Caco-2 (cell line): ENCODE measurements at regions of chr17 and their contacts with region 1.

Region 1: DNA sequence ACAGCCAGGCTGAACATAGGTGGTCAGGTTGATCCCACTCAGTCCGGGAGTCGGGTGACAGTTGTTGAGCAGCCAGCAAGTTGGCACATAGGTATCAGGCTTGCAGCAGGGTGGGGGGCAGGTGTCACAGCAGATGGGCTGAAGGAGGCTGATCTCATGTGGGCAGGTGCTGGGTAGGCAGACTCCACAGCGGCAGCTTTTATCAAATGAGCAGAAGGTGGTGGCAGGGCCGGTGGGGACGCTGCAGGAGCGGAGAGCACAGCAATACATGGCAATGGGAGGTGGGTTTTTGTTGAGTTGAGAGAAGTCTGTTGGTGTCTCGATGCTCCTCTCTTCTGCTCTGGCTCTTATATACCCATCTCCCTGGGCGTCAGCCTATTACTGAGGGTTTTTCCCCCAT is at the start of gene KRTAP3-1:
- DNase-seq: peak; percentile 57 to 66
- H3K4me3 ChIP-seq: no peak within 1 kb of the TSS
- H3K4me3 Mint-ChIP-seq: peak within 1 kb of the TSS; percentile 42
- H3K27ac Mint-ChIP-seq: peak within 1 kb of the TSS; percentile 94
- H3K4me1 ChIP-seq: peaks cover 50% of the 10 kb centered on the region
- H3K4me1 Mint-ChIP-seq: peaks cover 53% of the 10 kb centered on the region
- H3K27me3 ChIP-seq: no peaks in the 10 kb centered on the region
- H3K27me3 Mint-ChIP-seq: no peaks in the 10 kb centered on the region
- CTCF ChIP-seq: no peak
- total RNA-seq, gene KRTAP3-1: 7.4 and 7.9 TPM in 2 replicates

Region 2: DNA sequence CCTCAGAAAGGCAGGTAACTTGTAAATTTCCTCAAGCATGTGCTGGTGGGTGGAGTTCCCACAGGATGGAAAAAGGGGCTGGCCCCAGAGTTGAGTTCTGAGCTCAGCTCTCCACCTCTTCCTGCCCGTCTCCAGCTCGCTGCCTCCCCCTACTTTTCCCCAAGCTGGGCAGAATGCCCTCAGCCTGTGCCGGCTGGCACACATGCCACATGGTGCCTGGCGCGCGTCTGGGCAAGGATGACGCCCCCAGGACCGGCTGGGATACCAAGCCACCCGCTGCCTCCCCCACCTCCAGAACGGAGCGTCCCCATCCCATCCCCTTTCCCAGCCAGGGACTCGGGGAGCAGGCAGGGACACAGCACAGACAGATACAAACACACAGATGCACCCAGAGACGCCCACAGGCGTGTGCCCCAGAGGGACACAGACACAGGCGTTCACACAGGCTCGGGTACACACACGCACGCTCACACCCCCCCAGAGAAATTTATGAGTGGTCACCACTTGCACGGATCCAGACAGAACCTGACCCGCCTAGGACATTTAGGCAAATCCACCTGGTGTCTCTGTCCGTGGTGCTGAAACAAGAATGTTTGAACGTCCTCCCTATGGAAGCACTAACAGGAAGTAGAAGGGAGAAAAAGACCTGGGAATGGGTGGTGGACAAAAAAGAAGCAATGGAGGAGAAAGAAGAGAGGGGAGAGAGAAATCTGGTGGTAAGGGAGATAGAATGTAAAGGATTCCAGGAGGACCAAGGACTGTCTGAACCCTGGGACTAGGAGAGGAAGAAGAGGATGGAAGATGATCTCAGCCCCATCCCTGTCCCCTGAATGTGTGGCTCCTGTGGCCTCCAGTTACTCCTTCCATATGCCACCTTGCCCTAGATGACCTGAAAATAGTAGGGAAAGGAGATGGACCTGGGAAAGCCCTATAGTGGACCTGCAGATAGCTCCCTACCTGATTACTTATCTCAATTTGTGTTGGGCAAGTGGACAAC is 1416.5 kb before region 1 on chr17:
- CTCF ChIA-PET with region 1: no interaction called
- POLR2A ChIA-PET with region 1: no interaction called
- intact Hi-C with region 1: no loop called
- DNase-seq: peak; percentile 77 to 84
- H3K4me3 ChIP-seq: no peak overlapping the region
- H3K4me3 Mint-ChIP-seq: no peak overlapping the region
- H3K27ac Mint-ChIP-seq: no peak overlapping the region
- H3K4me1 ChIP-seq: no peaks in the 10 kb centered on the region
- H3K4me1 Mint-ChIP-seq: peaks cover 7% of the 10 kb centered on the region
- H3K27me3 ChIP-seq: peaks cover 4% of the 10 kb centered on the region
- H3K27me3 Mint-ChIP-seq: peaks cover 38% of the 10 kb centered on the region
- CTCF ChIP-seq: no peak

Region 3: DNA sequence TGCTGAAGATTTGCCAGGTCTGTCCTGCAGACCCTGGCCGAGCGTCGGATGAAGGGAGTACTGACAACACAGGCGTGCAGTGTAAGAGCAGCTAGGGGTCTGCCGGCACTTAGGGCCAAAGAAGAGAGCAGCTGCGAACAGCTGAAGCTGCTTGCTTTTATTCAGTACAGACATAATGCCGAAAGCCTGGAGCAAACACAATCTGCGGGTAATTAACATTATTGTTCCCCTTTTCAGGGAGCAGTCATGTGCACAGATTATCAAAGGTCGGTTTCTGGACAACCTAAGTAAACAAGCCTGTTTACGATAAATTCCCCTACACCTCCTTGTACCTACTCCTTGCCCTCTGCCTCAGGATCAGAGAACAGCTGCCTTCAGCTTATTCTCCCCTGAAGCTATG is 59.4 kb before region 1 on chr17:
- CTCF ChIA-PET with region 1: no interaction called
- POLR2A ChIA-PET with region 1: no interaction called
- intact Hi-C with region 1: loop called (anchors 1 kb)
- DNase-seq: peak; percentile 72 to 74
- H3K4me3 ChIP-seq: no peak overlapping the region
- H3K4me3 Mint-ChIP-seq: peak overlapping the region; percentile 62
- H3K27ac Mint-ChIP-seq: peak overlapping the region; percentile 88
- H3K4me1 ChIP-seq: peaks cover 58% of the 10 kb centered on the region
- H3K4me1 Mint-ChIP-seq: peaks cover 51% of the 10 kb centered on the region
- H3K27me3 ChIP-seq: no peaks in the 10 kb centered on the region
- H3K27me3 Mint-ChIP-seq: no peaks in the 10 kb centered on the region
- CTCF ChIP-seq: no peak

Region 4: GRCh38 chr17:40956401-40957254 is 52.2 kb before region 1 on chr17:
- CTCF ChIA-PET with region 1: no interaction called
- POLR2A ChIA-PET with region 1: no interaction called
- intact Hi-C with region 1: loop called (anchors 1 kb)
- DNase-seq: peak; percentile 75 to 82
- H3K4me3 ChIP-seq: no peak overlapping the region
- H3K4me3 Mint-ChIP-seq: peak overlapping the region; percentile 62
- H3K27ac Mint-ChIP-seq: peak overlapping the region; percentile 89
- H3K4me1 ChIP-seq: peaks cover 79% of the 10 kb centered on the region
- H3K4me1 Mint-ChIP-seq: peaks cover 72% of the 10 kb centered on the region
- H3K27me3 ChIP-seq: no peaks in the 10 kb centered on the region
- H3K27me3 Mint-ChIP-seq: no peaks in the 10 kb centered on the region
- CTCF ChIP-seq: no peak

Region 5: GRCh38 chr17:40986924-40987323 is 21.9 kb before region 1 on chr17:
- CTCF ChIA-PET with region 1: no interaction called
- POLR2A ChIA-PET with region 1: no interaction called
- intact Hi-C with region 1: no loop called
- DNase-seq: no peak
- H3K4me3 ChIP-seq: no peak overlapping the region
- H3K4me3 Mint-ChIP-seq: no peak overlapping the region
- H3K27ac Mint-ChIP-seq: no peak overlapping the region
- H3K4me1 ChIP-seq: no peaks in the 10 kb centered on the region
- H3K4me1 Mint-ChIP-seq: peaks cover under 1% of the 10 kb centered on the region
- H3K27me3 ChIP-seq: no peaks in the 10 kb centered on the region
- H3K27me3 Mint-ChIP-seq: no peaks in the 10 kb centered on the region
- CTCF ChIP-seq: no peak

Region 6: DNA sequence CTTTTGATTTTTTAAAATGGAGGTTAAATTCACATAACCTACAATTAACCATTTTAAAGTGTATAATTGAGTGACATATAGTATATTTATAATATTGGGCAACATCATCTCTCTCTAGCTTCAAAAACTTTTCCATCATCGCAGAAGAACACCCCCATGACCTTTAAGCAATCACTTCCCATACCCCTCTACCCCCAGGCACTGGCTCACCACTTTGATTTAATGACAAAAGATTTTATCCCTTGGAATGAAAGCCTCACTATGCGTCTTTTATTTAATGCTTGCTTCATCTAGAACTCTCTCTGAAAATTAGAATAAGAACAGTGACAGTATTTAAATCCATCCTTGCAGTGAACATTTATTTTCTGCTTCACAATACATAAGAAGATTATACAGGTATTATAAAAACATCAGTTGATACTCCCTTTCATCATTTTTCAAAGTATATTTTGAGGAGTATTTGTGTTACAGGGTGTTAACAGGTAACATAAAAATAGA is 29.1 kb after region 1 on chr17:
- CTCF ChIA-PET with region 1: no interaction called
- POLR2A ChIA-PET with region 1: no interaction called
- intact Hi-C with region 1: no loop called
- DNase-seq: no peak
- H3K4me3 ChIP-seq: no peak overlapping the region
- H3K4me3 Mint-ChIP-seq: no peak overlapping the region
- H3K27ac Mint-ChIP-seq: no peak overlapping the region
- H3K4me1 ChIP-seq: 0 out of 2 replicates have a peak, but pooled peaks cover 3% of the 10 kb centered on the region
- H3K4me1 Mint-ChIP-seq: peaks cover 8% of the 10 kb centered on the region
- H3K27me3 ChIP-seq: no peaks in the 10 kb centered on the region
- H3K27me3 Mint-ChIP-seq: no peaks in the 10 kb centered on the region
- CTCF ChIP-seq: no peak

Region 7: DNA sequence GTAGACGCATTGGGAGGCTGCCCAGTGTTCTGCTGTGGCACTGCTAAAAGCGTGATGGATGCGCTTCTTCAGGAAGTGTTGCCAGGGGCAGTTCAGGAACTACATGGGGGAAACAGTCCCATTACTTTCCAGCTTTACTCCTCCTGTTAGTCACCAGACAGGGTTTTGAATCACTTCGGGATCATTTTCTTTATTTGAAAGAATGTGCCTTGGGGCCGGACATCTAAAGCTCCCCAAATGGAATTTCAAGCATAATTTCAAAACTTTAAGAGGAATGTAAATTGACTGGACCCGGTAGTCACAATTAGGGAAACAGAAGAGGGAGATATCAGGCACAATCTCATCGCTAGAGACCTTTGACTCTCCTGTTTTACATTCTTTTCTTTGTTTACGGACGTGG is 39.6 kb after region 1 on chr17:
- CTCF ChIA-PET with region 1: no interaction called
- POLR2A ChIA-PET with region 1: no interaction called
- intact Hi-C with region 1: loop called (anchors 1 kb)
- DNase-seq: peak; percentile 48 to 65
- H3K4me3 ChIP-seq: no peak overlapping the region
- H3K4me3 Mint-ChIP-seq: peak overlapping the region; percentile 58
- H3K27ac Mint-ChIP-seq: peak overlapping the region; percentile 91
- H3K4me1 ChIP-seq: peaks cover 25% of the 10 kb centered on the region
- H3K4me1 Mint-ChIP-seq: peaks cover 19% of the 10 kb centered on the region
- H3K27me3 ChIP-seq: no peaks in the 10 kb centered on the region
- H3K27me3 Mint-ChIP-seq: no peaks in the 10 kb centered on the region
- CTCF ChIP-seq: no peak

Region 8: DNA sequence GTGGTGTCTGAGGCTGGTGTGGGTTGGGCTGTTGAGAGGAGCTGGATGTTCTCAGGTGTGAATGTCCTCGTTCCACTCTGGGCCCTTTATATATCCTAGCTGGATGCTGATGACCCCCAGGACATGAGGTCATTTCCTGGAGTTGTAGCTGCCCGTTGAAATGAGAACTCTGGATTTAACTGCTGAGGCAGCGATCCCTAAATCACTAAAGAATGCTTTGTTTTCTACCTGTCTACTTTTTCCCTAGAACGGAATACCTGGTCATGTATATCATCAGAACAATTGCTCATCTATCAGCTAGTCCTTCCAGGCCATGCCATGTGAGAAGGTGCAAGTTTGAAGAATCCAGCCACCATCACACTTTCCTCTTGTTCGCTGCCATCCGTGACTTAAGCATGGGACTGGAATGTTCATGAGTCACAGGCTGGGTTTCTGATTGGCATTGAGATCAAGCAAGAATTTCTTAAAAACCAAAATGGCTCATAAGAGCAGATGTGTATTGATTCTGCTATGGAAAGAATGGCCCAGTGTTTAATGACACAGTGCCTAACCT is 51.3 kb after region 1 on chr17 and contains the start of gene KRTAP2-3:
- CTCF ChIA-PET with region 1: no interaction called
- POLR2A ChIA-PET with region 1: interaction called, 10 read pairs
- intact Hi-C with region 1: loop called (anchors 1 kb)
- DNase-seq: peak in 1 of 2 experiments; percentile 24
- H3K4me3 ChIP-seq: peak within 1 kb of the TSS; percentile 22; the same call in 1 of the 2 replicates
- H3K4me3 Mint-ChIP-seq: peak within 1 kb of the TSS; percentile 68
- H3K27ac Mint-ChIP-seq: peak within 1 kb of the TSS; percentile 76
- H3K4me1 ChIP-seq: peaks cover 49% of the 10 kb centered on the region
- H3K4me1 Mint-ChIP-seq: peaks cover 45% of the 10 kb centered on the region
- H3K27me3 ChIP-seq: no peaks in the 10 kb centered on the region
- H3K27me3 Mint-ChIP-seq: no peaks in the 10 kb centered on the region
- CTCF ChIP-seq: no peak
- total RNA-seq, gene KRTAP2-3: 3.7 and 4.9 TPM in 2 replicates

Region 9: DNA sequence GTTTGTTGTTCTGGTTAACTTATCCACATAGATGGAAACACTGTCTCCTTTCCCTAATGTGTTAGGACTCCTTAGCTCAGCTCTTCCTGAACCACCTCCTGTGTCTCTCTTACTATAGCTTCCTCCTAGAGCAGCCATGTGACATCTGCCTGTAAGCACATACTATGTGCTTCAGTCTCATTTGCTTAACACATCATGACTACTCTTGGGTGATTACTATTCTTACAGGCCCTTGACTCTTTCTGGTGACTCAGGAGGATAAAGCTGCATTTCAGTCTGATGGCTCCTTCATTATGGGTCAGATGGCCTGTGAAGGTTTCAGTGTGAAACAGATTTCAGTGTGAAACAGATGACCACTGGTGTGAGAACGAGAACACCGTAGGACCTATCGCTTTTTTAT is 169.5 kb after region 1 on chr17:
- CTCF ChIA-PET with region 1: no interaction called
- POLR2A ChIA-PET with region 1: no interaction called
- intact Hi-C with region 1: loop called (anchors 1 kb)
- DNase-seq: no peak
- H3K4me3 ChIP-seq: no peak overlapping the region
- H3K4me3 Mint-ChIP-seq: no peak overlapping the region
- H3K27ac Mint-ChIP-seq: no peak overlapping the region
- H3K4me1 ChIP-seq: peaks cover 15% of the 10 kb centered on the region
- H3K4me1 Mint-ChIP-seq: peaks cover 9% of the 10 kb centered on the region
- H3K27me3 ChIP-seq: no peaks in the 10 kb centered on the region
- H3K27me3 Mint-ChIP-seq: no peaks in the 10 kb centered on the region
- CTCF ChIP-seq: no peak

Region 10: DNA sequence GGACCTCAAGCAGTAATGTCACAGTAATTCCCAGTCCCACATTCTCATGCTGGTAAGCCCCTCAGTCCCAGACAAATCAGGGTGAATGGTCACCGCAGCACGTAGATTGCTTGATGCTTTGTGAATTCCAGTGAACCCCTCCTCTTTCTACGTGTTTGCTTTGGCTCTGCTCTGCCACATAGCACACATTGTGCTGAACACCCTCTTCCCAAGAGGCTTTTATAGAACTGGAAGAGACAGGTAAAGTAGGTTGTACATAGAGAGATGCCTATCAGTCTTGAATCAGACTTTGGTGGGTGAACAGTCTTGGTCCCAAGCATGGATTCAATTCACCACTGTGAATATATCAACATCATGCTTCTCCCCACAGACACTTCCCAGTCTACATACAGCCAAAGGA is 255.8 kb after region 1 on chr17:
- CTCF ChIA-PET with region 1: no interaction called
- POLR2A ChIA-PET with region 1: no interaction called
- intact Hi-C with region 1: no loop called
- DNase-seq: no peak
- H3K4me3 ChIP-seq: no peak overlapping the region
- H3K4me3 Mint-ChIP-seq: no peak overlapping the region
- H3K27ac Mint-ChIP-seq: no peak overlapping the region
- H3K4me1 ChIP-seq: no peaks in the 10 kb centered on the region
- H3K4me1 Mint-ChIP-seq: no peaks in the 10 kb centered on the region
- H3K27me3 ChIP-seq: no peaks in the 10 kb centered on the region
- H3K27me3 Mint-ChIP-seq: no peaks in the 10 kb centered on the region
- CTCF ChIP-seq: no peak